Dorsolateral prefrontal cortex (tissue), 120 donors: ENCODE measurements at regions of chr7 and their contacts with region 1.

Region 1: GRCh38 chr7:99472561-99473243 is at the start of gene ZNF789:
- DNase-seq: peak; percentile 98 to 100 (median 99)
- H3K4me3 ChIP-seq: peak within 1 kb of the TSS; percentile 65 to 100 (median 87)
- H3K27ac ChIP-seq: peak within 1 kb of the TSS; percentile 43 to 99 (median 93)
- H3K27me3 ChIP-seq: no peaks in the 10 kb centered on the region
- CTCF ChIP-seq: peak in 37 of 56 donors; percentile 4 to 52 (median 25)
- total RNA-seq, gene ZNF789: 11.6 to 35.5 (median 20.6) TPM

Region 2: DNA sequence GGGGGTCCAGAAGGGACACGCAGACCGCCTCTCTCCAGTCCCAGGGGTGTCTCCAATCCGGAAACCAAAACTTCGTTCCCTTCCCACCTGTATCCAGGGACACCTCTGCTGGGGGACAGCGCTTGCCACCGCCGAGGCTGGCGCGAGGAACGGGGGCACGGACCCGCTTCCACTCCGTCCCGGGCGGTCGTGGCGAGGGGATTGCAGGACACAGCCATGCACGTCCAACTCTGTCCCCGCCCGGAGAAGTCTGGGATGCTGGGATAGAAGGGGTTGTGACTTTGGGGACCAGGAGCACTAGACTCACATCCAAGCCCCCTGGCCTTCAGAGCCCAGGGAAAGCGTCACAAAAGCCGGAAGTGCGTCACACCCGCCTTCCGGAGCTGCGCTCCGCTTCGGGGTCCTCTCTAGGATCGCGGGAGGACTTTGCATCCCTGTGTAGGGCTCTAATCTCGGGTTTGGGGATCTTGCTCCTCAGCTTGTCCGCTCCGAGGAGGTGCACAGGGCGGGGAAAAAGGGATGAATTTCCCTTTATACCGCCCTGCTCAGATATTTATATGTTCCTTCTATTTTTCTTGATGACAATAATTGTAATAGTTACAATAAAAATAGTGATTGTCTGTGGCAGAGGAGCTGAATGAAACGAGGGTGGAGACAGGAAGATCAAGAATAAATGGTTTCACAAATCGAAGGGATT is 79.2 kb after region 1 on chr7 and contains the start of gene FAM200A:
- intact Hi-C with region 1: loop called in 1 of 2 experiments (anchors 10 kb)
- DNase-seq: peak; percentile 82 to 94 (median 90)
- H3K4me3 ChIP-seq: peak within 1 kb of the TSS; percentile 68 to 100 (median 94)
- H3K27ac ChIP-seq: peak within 1 kb of the TSS in 56 of 59 donors; percentile 1 to 94 (median 80)
- H3K27me3 ChIP-seq: no peaks in the 10 kb centered on the region
- CTCF ChIP-seq: peak in 8 of 56 donors; percentile 12 to 30 (median 16)
- total RNA-seq, gene FAM200A: 5.4 to 10.6 (median 8.1) TPM

Region 3: GRCh38 chr7:99910976-99911375 is 438.3 kb after region 1 on chr7:
- intact Hi-C with region 1: no loop called
- DNase-seq: no peak
- H3K4me3 ChIP-seq: no peak overlapping the region
- H3K27ac ChIP-seq: no peak overlapping the region
- H3K27me3 ChIP-seq: no peaks in the 10 kb centered on the region
- CTCF ChIP-seq: no peak